ENCODE measurements at regions of chr10 and their contacts with region 1.

Region 1: DNA sequence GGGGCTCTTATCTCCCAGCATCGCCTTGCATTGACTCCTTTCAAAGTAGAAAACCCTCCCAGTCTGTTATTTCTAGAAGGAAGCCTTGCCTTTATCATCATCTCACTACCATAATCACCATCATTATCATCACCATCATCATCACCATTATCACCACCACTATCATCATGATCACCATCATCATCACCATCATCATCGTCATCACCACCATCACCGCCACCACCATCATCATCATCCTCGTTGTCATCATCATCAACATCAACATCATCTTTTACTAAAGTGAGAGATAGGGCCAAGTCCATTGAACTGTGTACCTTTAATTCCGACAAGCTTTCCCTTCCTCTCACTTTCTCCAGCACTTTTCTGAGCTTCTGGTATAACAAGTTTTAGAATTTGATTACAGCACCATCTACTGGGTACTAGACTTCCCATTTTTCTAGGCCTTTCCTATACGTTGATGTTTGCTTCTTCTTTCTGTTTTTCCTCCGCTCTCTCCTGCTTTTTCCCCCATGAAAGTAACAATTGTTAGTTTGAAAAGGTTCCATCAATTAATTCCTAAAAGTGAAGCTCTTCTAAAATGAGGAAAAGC is 226.4 kb downstream of the BUB3 start:
- DNase-seq: peak; percentile 58
- H3K4me3 ChIP-seq: no peak overlapping the region
- H3K27ac ChIP-seq: no peak overlapping the region
- H3K4me1 ChIP-seq: no peaks in the 10 kb centered on the region; a peak in 1 of 4 replicates
- H3K27me3 ChIP-seq: no peaks in the 10 kb centered on the region
- CTCF ChIP-seq: peak; percentile 30; the same call in 1 of the 2 replicates
- EP300 ChIP-seq: no peak
- RAD21 ChIP-seq: peak; percentile 83

Region 2: GRCh38 chr10:123132576-123133477 is 247.8 kb before region 1 on chr10:
- CTCF ChIA-PET with region 1: interaction called, 110 read pairs
- POLR2A ChIA-PET with region 1: no interaction called
- DNase-seq: peak; percentile 89
- H3K4me3 ChIP-seq: peak overlapping the region; percentile 39 to 57
- H3K27ac ChIP-seq: no peak overlapping the region
- H3K4me1 ChIP-seq: peaks cover 0 to 8% of the 10 kb centered on the region in 2 experiments; a peak in 2 of 4 replicates
- H3K27me3 ChIP-seq: peaks cover 65% of the 10 kb centered on the region
- CTCF ChIP-seq: peak; percentile 92
- EP300 ChIP-seq: no peak
- RAD21 ChIP-seq: peak; percentile 91

Region 3: GRCh38 chr10:123147635-123148413 is 232.8 kb before region 1 on chr10 and contains the start of gene HMX2:
- CTCF ChIA-PET with region 1: interaction called, 51 read pairs
- POLR2A ChIA-PET with region 1: no interaction called
- DNase-seq: peak; percentile 55
- H3K4me3 ChIP-seq: no peak within 1 kb of the TSS
- H3K27ac ChIP-seq: no peak within 1 kb of the TSS
- H3K4me1 ChIP-seq: peaks cover 0 to 23% of the 10 kb centered on the region in 2 experiments; a peak in 2 of 4 replicates
- H3K27me3 ChIP-seq: peaks cover 99% of the 10 kb centered on the region
- CTCF ChIP-seq: no peak
- EP300 ChIP-seq: no peak
- RAD21 ChIP-seq: no peak
- polyA plus RNA-seq, gene HMX2: not detected in 2 replicates

Region 4: GRCh38 chr10:123320091-123320490 is 60.5 kb before region 1 on chr10:
- CTCF ChIA-PET with region 1: interaction called, 14 read pairs
- POLR2A ChIA-PET with region 1: no interaction called
- DNase-seq: no peak
- H3K4me3 ChIP-seq: no peak overlapping the region
- H3K27ac ChIP-seq: no peak overlapping the region
- H3K4me1 ChIP-seq: peaks cover 0 to 6% of the 10 kb centered on the region in 2 experiments; a peak in 2 of 4 replicates
- H3K27me3 ChIP-seq: no peaks in the 10 kb centered on the region
- CTCF ChIP-seq: no peak
- EP300 ChIP-seq: no peak
- RAD21 ChIP-seq: no peak

Region 5: DNA sequence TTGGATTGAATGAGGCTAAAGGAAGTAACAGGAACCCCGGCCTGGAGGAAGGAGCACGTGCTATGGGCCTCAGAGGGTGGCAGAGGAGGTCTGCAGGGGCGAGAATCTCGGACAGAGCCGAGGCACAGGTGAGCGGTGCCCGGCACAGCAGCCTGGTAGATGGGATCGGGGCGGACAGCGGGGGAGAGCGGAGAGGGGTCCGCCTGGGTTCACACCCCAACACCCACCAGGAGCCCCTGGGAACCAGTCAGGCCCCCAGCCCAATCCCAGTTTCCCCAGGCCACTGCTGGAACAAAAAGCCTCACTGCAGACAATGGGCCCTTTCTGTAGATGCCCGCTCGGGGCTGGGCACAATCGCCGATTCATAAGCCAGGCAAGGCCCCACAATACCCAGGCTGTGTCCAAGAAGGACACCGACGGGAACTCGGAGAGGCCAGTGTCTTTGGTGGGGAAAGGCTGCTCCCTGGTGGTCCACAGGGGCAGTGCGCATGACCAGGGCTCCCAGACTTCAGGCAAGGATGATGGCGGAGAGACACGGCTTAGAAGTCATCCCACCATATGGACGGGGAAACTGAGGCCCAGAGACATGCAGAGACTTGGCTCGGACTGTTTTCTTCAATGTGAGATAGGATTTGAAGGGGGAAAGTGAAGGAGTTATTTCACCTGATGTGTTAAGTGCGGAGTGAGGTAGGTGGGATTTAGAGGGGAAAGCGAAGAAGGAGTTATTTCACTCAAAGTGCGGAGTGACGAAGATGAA is 178.7 kb after region 1 on chr10:
- CTCF ChIA-PET with region 1: interaction called, 10 read pairs
- POLR2A ChIA-PET with region 1: no interaction called
- DNase-seq: peak; percentile 88
- H3K4me3 ChIP-seq: no peak overlapping the region
- H3K27ac ChIP-seq: no peak overlapping the region
- H3K4me1 ChIP-seq: no peaks in the 10 kb centered on the region
- H3K27me3 ChIP-seq: no peaks in the 10 kb centered on the region
- CTCF ChIP-seq: peak; percentile 88
- EP300 ChIP-seq: no peak
- RAD21 ChIP-seq: peak; percentile 94

Region 6: GRCh38 chr10:123926401-123927264 is 546.0 kb after region 1 on chr10:
- CTCF ChIA-PET with region 1: no interaction called
- POLR2A ChIA-PET with region 1: no interaction called
- DNase-seq: no peak
- H3K4me3 ChIP-seq: no peak overlapping the region
- H3K27ac ChIP-seq: no peak overlapping the region
- H3K4me1 ChIP-seq: no peaks in the 10 kb centered on the region; a peak in 1 of 4 replicates
- H3K27me3 ChIP-seq: no peaks in the 10 kb centered on the region
- CTCF ChIP-seq: no peak
- EP300 ChIP-seq: no peak
- RAD21 ChIP-seq: no peak

Measured in SK-N-SH (cell line).